ENCODE measurements at regions of chr4 and their contacts with region 1.

Region 1: GRCh38 chr4:74376888-74377483 is 12.0 kb downstream of the EREG start:
- DNase-seq: peak; percentile 46
- H3K4me3 ChIP-seq: peak overlapping the region in 2 of 3 experiments; percentile 23 to 37
- H3K27ac ChIP-seq: peak overlapping the region; percentile 98
- H3K4me1 ChIP-seq: peaks cover 43% of the 10 kb centered on the region
- H3K27me3 ChIP-seq: no peaks in the 10 kb centered on the region
- CTCF ChIP-seq: peak; percentile 46 to 68

Region 2: DNA sequence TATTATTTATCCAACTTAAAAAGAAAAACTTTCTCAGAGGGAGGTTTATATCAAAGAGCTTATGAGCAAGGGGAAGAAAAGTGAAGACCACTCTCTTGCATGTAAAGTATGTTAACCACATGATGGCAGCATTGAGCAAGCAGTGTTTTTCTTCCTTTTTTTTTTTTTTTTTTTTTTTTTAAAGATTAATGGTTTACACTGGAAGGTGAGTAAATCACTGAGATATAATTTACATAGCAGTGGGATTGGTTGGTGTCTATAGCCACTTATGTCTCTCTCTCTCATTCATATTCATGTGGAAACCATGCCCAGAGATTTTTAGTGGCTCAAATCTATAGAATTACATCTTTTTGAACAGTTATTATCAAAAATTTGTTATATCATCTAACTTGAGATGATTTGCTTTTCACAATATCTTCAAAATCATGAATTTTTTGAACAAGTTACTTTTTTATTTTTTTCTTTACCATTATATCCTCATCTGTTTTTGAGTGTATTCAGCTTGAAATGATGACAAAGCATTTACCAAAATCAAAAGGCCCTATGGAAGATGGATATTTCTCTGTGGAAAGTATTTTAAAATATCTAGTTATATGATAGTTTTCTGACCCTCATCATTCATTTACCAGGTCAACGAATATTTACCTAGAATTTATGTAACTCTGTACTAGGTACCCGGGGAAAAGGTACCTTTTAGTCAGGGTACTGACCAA is 187.5 kb before region 1 on chr4:
- CTCF ChIA-PET with region 1: no interaction called
- dilution Hi-C with region 1: no loop called
- in situ Hi-C with region 1: no loop called
- intact Hi-C with region 1: loop called (anchors 2 kb)
- DNase-seq: peak; percentile 44
- H3K4me3 ChIP-seq: no peak overlapping the region
- H3K27ac ChIP-seq: no peak overlapping the region
- H3K4me1 ChIP-seq: no peaks in the 10 kb centered on the region
- H3K27me3 ChIP-seq: no peaks in the 10 kb centered on the region
- CTCF ChIP-seq: peak; percentile 71 to 73

Region 3: DNA sequence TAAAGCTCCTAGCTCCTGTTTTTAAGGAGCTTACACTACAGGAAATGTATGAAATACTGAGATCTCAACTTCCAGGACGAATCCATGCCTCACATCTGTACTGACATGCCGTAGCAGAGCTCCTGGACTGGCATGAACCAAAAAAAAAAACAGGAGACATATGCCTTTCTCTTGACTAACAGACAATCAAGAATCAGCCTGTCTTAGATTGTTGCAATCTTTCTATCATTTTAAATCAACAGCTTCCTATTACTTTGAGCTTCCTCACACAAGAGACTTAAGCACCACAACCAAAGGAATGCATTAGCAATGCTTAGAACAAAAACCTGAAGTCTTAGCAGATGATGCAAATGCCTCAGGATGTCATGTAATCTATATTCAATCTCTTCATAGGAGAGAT is 33.3 kb after region 1 on chr4:
- CTCF ChIA-PET with region 1: no interaction called
- dilution Hi-C with region 1: no loop called
- in situ Hi-C with region 1: no loop called
- intact Hi-C with region 1: loop called (anchors 1 kb)
- DNase-seq: peak; percentile 98
- H3K4me3 ChIP-seq: peak overlapping the region in 1 of 3 experiments; percentile 8
- H3K27ac ChIP-seq: peak overlapping the region; percentile 99
- H3K4me1 ChIP-seq: peaks cover 71% of the 10 kb centered on the region
- H3K27me3 ChIP-seq: no peaks in the 10 kb centered on the region
- CTCF ChIP-seq: no peak

Region 4: GRCh38 chr4:74437866-74438265 is 60.9 kb after region 1 on chr4:
- CTCF ChIA-PET with region 1: no interaction called
- dilution Hi-C with region 1: no loop called
- in situ Hi-C with region 1: loop called in 1 of 2 experiments (anchors 5 kb)
- intact Hi-C with region 1: loop called (anchors 1 kb)
- DNase-seq: no peak
- H3K4me3 ChIP-seq: no peak overlapping the region
- H3K27ac ChIP-seq: no peak overlapping the region
- H3K4me1 ChIP-seq: peaks cover 34% of the 10 kb centered on the region
- H3K27me3 ChIP-seq: no peaks in the 10 kb centered on the region
- CTCF ChIP-seq: no peak

Region 5: GRCh38 chr4:74451200-74451661 is 74.2 kb after region 1 on chr4:
- CTCF ChIA-PET with region 1: no interaction called
- dilution Hi-C with region 1: no loop called
- in situ Hi-C with region 1: no loop called
- intact Hi-C with region 1: loop called (anchors 1 kb)
- DNase-seq: peak; percentile 63
- H3K4me3 ChIP-seq: peak overlapping the region; percentile 83 to 93 (median 93)
- H3K27ac ChIP-seq: peak overlapping the region; percentile 99
- H3K4me1 ChIP-seq: peaks cover 11% of the 10 kb centered on the region
- H3K27me3 ChIP-seq: no peaks in the 10 kb centered on the region
- CTCF ChIP-seq: no peak

Region 6: DNA sequence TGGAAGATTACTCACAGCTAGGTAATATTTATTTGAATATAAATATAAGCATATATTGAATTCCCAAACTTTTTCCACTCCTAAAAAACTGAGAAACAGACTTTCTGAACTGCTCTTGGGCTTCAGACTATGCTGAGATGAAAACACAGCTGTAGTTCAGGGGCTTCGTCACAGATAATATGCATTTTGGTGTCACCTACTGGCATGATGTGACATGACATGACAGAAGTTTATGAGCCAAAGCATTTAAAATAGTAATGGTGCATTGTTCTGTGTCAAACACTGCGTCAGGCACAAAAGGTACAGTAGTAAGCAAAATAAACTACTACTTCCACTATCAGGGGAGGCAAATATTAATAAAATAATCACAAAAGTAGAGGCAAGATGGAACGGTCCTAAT is 246.1 kb after region 1 on chr4:
- CTCF ChIA-PET with region 1: no interaction called
- dilution Hi-C with region 1: no loop called
- in situ Hi-C with region 1: no loop called
- intact Hi-C with region 1: loop called (anchors 1 kb)
- DNase-seq: peak; percentile 52
- H3K4me3 ChIP-seq: no peak overlapping the region
- H3K27ac ChIP-seq: peak overlapping the region; percentile 91
- H3K4me1 ChIP-seq: peaks cover 75% of the 10 kb centered on the region
- H3K27me3 ChIP-seq: no peaks in the 10 kb centered on the region
- CTCF ChIP-seq: peak; percentile 50 to 64

Region 7: GRCh38 chr4:75251547-75251946 is 874.6 kb after region 1 on chr4:
- CTCF ChIA-PET with region 1: no interaction called
- dilution Hi-C with region 1: no loop called
- in situ Hi-C with region 1: no loop called
- intact Hi-C with region 1: no loop called
- DNase-seq: no peak
- H3K4me3 ChIP-seq: no peak overlapping the region
- H3K27ac ChIP-seq: no peak overlapping the region
- H3K4me1 ChIP-seq: no peaks in the 10 kb centered on the region
- H3K27me3 ChIP-seq: no peaks in the 10 kb centered on the region
- CTCF ChIP-seq: no peak

Measured in mammary epithelial cell (primary cell).